Esophagus muscularis mucosa (tissue), 4 donors: ENCODE measurements at regions of chr4 and their contacts with region 1.

Region 1: DNA sequence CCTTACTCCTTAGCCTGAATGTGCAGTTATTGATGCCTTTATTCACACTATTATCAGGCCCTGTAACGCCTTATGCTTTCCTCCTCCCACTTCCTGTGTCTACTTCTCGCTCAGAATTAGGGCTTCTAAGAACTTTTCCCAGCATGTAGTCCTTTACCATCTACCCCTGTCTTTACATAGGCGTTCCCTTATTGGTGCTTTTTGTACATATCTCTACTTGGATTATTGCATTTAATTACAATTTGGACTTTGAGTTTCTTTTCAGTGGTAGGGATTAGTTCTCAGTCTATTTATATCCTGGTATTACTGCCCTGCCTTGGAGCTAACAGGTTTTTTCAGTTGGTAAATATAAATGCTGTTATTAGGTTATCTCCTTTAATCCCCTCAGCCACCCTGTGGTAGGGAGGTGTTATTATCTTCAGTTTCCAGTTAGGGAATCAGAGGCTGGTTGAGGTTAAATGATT is 84.0 kb downstream of the RBPJ start:
- DNase-seq: no peak
- H3K4me3 ChIP-seq: no peak overlapping the region
- H3K27ac ChIP-seq: no peak overlapping the region
- H3K4me1 ChIP-seq: peaks cover 0 to 17% (median 11%) of the 10 kb centered on the region in 4 donors
- H3K27me3 ChIP-seq: no peaks in the 10 kb centered on the region
- CTCF ChIP-seq: no peak
- EP300 ChIP-seq: no peak
- POLR2A ChIP-seq: no peak

Region 2: DNA sequence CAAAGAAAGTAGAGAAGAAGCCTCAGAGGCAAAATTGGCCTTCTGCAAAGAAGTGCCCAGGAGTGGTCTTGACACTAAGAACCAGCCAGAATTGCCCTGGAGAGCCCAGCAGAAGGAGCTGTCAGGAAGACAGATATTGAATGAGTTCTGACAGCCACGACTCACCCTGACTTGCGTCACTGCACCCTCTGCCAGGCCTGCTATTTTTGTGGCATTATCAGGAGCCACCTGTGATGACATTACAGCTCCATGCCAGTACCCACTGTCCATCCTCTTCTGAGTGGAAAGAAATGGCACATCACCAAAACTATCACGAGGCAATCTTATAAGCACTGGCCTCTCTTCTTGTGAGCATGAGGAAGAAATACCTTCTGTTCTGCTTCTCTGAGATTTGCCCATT is 423.0 kb before region 1 on chr4:
- intact Hi-C with region 1: loop called (anchors 10 kb)
- DNase-seq: no peak
- H3K4me3 ChIP-seq: no peak overlapping the region
- H3K27ac ChIP-seq: no peak overlapping the region
- H3K4me1 ChIP-seq: no peaks in the 10 kb centered on the region
- H3K27me3 ChIP-seq: no peaks in the 10 kb centered on the region
- CTCF ChIP-seq: no peak
- EP300 ChIP-seq: no peak
- POLR2A ChIP-seq: no peak